ENCODE measurements at regions of chr17 and their contacts with region 1.

Region 1: DNA sequence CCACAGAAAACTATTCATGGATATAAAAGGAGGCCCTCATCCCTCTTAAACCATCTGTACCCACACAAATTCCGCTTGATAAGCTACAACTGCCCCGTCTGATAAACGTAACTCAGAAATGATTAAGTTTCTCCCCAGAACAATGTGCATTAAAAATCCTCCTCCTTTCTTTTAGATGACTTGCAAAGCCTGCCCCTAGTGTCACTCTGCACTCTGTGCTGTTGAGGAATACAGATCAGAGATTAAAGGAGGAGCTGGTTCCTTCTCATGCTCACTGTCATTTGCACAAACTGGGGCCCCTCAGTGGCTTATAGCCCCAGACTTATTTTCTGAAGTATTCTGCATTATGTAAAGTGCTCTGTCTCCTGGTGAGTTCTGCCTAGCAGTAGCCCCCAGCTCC is 33.3 kb downstream of the CDRT15 start:
- DNase-seq: peak; percentile 60
- H3K4me3 Mint-ChIP-seq: no peak overlapping the region
- H3K27ac Mint-ChIP-seq: peak overlapping the region; percentile 77
- H3K4me1 Mint-ChIP-seq: peaks cover 85% of the 10 kb centered on the region
- H3K27me3 Mint-ChIP-seq: no peaks in the 10 kb centered on the region

Region 2: GRCh38 chr17:14019186-14019956 is 184.0 kb before region 1 on chr17:
- CTCF ChIA-PET with region 1: no interaction called
- POLR2A ChIA-PET with region 1: no interaction called
- intact Hi-C with region 1: loop called (anchors 5 kb)
- DNase-seq: peak; percentile 52
- H3K4me3 Mint-ChIP-seq: no peak overlapping the region
- H3K27ac Mint-ChIP-seq: no peak overlapping the region
- H3K4me1 Mint-ChIP-seq: peaks cover 18% of the 10 kb centered on the region
- H3K27me3 Mint-ChIP-seq: no peaks in the 10 kb centered on the region

Region 3: DNA sequence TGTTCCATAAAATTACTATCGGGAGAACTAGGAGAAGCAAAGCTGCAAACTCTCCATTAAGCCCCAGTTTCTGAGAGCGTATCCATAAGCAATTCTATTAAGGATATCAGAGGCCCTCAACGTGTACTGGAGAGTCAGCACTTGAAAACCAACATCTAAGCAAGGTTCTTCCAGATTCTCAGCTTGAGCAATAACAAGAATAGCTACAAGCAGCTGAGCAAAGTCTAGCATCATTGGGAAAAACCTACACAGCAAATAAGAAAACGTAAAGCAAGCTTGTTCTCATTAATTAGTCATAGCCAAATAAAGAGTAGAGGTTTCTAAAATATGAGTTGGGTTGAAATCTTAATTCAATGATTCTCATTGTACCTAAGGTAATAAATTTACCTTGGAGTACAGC is 161.0 kb before region 1 on chr17:
- CTCF ChIA-PET with region 1: interaction called, 3 read pairs
- POLR2A ChIA-PET with region 1: interaction called, 3 read pairs
- intact Hi-C with region 1: loop called (anchors 1 kb)
- DNase-seq: no peak
- H3K4me3 Mint-ChIP-seq: no peak overlapping the region
- H3K27ac Mint-ChIP-seq: no peak overlapping the region
- H3K4me1 Mint-ChIP-seq: peaks cover 42% of the 10 kb centered on the region
- H3K27me3 Mint-ChIP-seq: no peaks in the 10 kb centered on the region

Region 4: DNA sequence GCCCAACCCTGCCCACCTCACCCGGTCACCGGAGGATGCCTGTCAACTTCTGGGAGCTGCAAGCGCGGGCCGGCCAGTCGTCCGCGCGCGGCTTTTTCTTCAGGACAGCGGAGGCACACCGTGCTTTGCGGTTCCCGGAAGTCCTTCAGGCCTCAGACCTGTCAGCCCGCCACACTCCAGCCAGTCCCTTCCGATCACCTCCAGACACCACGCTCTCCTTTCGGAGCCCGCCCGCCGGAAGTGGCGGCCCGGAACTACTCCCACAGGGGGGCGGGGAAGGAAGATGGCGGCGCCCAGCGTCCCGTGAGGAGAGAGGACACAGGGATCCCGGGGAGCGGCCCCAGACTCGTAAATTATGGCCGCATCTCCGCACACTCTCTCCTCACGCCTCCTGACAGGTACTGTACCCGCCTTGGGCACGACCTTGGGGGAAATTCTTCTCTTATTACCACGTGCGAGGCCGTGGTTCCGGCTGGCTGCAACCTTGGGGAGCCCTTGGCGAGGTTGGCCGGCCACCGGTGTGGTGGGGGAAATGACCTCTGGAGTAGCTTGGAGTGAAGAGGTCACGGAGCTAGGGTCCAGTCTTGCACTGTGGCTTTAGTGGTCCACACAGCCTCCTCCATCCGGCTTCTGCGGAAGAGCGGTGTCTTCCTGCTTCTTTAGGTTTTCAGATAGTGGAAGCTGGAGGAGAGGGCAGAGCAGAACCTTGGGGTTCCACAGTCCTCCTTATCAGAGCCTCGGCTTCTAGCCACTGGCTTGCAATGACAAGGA is 134.0 kb before region 1 on chr17 and contains the start of gene COX10:
- CTCF ChIA-PET with region 1: interaction called, 6 read pairs
- POLR2A ChIA-PET with region 1: interaction called, 3 read pairs
- intact Hi-C with region 1: loop called (anchors 2 kb)
- DNase-seq: peak; percentile 90
- H3K4me3 Mint-ChIP-seq: peak within 1 kb of the TSS; percentile 98
- H3K27ac Mint-ChIP-seq: peak within 1 kb of the TSS; percentile 89
- H3K4me1 Mint-ChIP-seq: peaks cover 58% of the 10 kb centered on the region
- H3K27me3 Mint-ChIP-seq: no peaks in the 10 kb centered on the region
- total RNA-seq, gene COX10: 22.9 to 23.6 TPM

Region 5: DNA sequence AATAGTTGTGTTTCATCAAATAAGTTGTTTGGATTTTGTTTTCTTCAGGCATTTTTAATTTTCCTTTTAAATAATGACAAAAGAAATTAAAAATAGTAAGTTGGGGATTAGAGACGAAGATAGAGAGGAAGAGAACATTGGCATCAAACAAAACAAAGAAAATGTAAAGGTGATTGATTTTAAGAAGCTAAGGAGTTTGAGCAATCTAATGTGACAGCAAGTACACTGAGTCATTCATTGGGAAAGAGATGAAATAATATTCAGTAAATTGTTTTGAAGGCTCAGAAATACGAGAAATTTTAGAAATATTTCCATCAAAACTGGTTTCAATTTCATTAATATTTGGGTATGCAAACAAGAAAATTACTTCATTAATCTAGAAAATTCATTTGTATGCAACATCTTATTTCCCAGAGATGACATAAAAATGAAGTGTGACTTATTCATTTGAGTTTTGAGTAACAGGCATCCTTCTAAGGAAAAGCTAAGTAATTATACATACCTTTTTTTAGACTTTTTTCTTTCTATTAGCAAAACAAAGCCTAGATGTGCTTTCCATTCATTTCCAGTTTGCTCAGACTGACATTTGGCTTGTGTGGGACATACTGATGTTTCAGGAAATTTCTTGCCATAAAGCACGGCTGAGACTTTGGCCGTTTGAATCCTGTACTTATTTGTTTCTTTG is 67.3 kb before region 1 on chr17:
- CTCF ChIA-PET with region 1: no interaction called
- POLR2A ChIA-PET with region 1: no interaction called
- intact Hi-C with region 1: loop called (anchors 5 kb)
- DNase-seq: no peak
- H3K4me3 Mint-ChIP-seq: no peak overlapping the region
- H3K27ac Mint-ChIP-seq: peak overlapping the region; percentile 64
- H3K4me1 Mint-ChIP-seq: peaks cover 18% of the 10 kb centered on the region
- H3K27me3 Mint-ChIP-seq: no peaks in the 10 kb centered on the region

Measured in activated CD4-positive, alpha-beta memory T cell treated with anti-CD3 and anti-CD28 coated beads for 36 hours (primary cell).